ENCODE measurements at regions of chr1 and their contacts with region 1.

Region 1: GRCh38 chr1:26233903-26234643 is at the start of gene CEP85:
- DNase-seq: peak; percentile 98 to 99 (median 99)
- ATAC-seq: peak; percentile 100
- H3K4me3 ChIP-seq: peak within 1 kb of the TSS; percentile 54
- H3K27ac ChIP-seq: peak within 1 kb of the TSS; percentile 62
- H3K4me1 ChIP-seq: no peaks in the 10 kb centered on the region
- H3K27me3 ChIP-seq: no peaks in the 10 kb centered on the region
- total RNA-seq, gene CEP85: 18.9 to 56.2 (median 32.9) TPM

Region 2: DNA sequence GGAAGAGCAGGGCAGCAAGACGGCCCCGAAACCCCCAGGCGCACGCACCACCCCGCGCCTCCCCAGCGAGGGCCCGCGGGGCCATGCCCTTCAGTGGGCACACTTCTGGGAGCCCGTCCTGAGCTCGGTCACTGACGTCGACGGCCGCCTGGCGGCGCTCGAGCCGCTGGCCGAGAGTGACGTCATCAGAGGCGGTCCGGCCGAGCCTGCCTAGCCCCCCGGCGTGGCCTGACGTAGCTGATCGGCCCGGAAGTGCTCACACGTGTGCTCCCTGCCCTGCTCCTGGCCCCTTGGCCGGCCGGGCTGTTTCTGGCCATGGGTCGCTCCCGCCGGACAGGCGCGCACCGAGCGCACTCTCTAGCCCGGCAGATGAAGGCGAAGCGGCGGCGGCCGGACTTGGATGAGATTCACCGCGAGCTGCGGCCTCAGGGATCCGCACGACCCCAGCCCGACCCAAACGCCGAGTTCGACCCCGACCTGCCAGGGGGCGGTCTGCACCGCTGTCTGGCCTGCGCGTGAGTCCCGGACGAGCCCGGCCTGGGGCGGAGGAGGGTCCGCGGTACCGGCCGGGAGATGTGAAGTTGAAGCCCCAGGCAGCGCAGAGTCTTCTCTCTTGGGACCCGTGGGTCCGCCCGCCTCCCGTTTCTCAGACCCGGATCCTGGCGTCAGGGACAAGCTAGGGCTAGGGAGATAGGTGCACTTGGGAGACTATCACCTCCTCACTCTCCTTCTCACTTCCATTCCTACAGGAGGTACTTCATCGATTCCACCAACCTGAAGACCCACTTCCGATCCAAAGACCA is 64.2 kb before region 1 on chr1 and contains the start of gene ZNF593:
- intact Hi-C with region 1: loop called in 1 of 4 experiments (anchors 10 kb)
- DNase-seq: peak; percentile 95 to 97 (median 97)
- ATAC-seq: peak; percentile 97
- H3K4me3 ChIP-seq: peak within 1 kb of the TSS; percentile 68
- H3K27ac ChIP-seq: peak within 1 kb of the TSS; percentile 39
- H3K4me1 ChIP-seq: peaks cover 2% of the 10 kb centered on the region
- H3K27me3 ChIP-seq: no peaks in the 10 kb centered on the region
- total RNA-seq, gene ZNF593: 14.4 to 24.2 (median 20.5) TPM

Region 3: DNA sequence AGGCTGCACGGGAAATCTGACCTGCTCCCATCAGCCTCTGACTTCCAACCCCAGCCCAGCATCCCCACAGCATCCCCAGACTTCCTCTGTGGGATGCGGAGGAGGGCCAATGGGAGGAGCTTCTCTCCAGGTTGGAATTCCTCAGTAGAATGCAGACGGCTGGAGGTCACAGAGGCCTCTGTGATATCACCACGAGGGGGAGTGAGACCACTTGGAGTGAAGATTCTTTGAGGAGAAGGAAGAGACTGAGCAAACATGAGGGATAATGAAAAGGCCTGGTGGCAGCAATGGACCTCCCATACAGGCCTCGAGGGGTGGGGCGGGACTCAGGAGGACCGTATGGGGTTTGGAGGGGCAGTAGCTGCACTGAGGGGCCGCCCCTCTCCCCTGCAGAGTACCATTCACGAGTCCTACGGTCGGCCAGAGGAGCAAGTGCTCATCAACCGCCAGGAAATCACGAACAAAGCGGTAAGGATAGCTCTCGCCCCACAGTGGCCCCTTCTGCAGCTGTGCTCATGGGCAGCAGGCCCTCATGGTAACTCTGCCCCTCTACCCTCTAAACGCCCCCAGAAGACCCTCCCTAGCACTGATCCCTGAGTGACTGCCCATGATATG is 43.6 kb before region 1 on chr1 and contains the start of gene CATSPER4:
- intact Hi-C with region 1: no loop called
- DNase-seq: no peak
- ATAC-seq: no peak
- H3K4me3 ChIP-seq: no peak within 1 kb of the TSS
- H3K27ac ChIP-seq: no peak within 1 kb of the TSS
- H3K4me1 ChIP-seq: no peaks in the 10 kb centered on the region
- H3K27me3 ChIP-seq: no peaks in the 10 kb centered on the region
- total RNA-seq, gene CATSPER4: not detected

Measured in right cardiac atrium (tissue), 5 donors.